ENCODE measurements at regions of chr14 and their contacts with region 1.

Region 1: DNA sequence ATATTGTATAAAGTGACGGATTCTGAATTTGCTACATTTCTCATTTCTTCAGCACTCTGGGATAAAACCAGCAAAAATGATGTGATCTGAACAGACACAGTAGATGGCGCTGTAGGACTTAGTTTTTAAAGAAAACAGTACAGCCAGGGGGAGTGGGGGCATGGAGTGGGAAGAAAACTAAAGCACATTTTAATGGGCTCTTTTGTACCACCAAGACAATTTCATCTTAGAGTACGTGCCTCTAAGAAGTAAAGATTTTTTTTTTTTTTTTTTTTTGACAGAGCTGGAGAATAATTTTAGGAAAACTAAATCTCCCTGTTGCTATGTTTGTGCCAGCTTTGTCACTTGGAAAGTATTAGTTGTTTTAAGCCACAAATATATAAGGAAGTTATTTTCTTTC is 124.4 kb downstream of the RAD51B start:
- DNase-seq: peak in 6 of 10 donors; percentile 7 to 70 (median 32)
- H3K4me3 ChIP-seq: peak overlapping the region in 1 of 59 donors; percentile 16
- H3K27ac ChIP-seq: no peak overlapping the region
- H3K27me3 ChIP-seq: no peaks in the 10 kb centered on the region
- CTCF ChIP-seq: peak; percentile 64 to 90 (median 80)

Region 2: DNA sequence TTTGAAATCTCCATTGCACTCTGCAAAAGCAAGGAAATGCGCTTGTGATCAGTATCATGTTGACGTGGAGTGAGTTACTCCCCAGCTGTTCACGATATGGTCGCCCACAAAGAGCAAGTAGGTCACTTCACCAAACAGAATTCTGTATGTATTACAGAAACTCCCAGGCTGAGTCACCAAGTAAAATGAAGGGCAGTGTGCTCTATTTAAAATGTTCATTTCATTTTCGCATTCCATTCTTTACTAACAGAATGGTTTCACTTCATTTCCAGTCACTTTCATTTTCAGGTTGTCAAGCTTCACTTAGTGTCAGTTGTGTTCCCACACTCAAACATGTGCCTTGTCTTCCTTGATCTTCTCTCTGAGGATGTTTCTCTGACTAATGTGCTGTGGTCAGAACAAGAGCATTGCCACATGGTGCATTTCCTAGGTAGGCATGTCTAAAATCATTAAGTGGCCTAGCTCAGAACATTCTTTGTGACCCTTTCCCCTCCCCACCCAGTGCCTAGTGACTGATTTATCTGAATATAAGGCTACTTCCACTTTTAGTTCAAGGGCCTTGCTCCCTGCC is 266.9 kb after region 1 on chr14:
- intact Hi-C with region 1: loop called in 1 of 2 experiments (anchors 10 kb)
- DNase-seq: no peak
- H3K4me3 ChIP-seq: peak overlapping the region in 26 of 59 donors; percentile 0 to 41 (median 14)
- H3K27ac ChIP-seq: peak overlapping the region in 14 of 59 donors; percentile 2 to 54 (median 17)
- H3K27me3 ChIP-seq: no peaks in the 10 kb centered on the region
- CTCF ChIP-seq: no peak